H1 (cell line): ENCODE measurements at regions of chr17 and their contacts with region 1.

Region 1: DNA sequence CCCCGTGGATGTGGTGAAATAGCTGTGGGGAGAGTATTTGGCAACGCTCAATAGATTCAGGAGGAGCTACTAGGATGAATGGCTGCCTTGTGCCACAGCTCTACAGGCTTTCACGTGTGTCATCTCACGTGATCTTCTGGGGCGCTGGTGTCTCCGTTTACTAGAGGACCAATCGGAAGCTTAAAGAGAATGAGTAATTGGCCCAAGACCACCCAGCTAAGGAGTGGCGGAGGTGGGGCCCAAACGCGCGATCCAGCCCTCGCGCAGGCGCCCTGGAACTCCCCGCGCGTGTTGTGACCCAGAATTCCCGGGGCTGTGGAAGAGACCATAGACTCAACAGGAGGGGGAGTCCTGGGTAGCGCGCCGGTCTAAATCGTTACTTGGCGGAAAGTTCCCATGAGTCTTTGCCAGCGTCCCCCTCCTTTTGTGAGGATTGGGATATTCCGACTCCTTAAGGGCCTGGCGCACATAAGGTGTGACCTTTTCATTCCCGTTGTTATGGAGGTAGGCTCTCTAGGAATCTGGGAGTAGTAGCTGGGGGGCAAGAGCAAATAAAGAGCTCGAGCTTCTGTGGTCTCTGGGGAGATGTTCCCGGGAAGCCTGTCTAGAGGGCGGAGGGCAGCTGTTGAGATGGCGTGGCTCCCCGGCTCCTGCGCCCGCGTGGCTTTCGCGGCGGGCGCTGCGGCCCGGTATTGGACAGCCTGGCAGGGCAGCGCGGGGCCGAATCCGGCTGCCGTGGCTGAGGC is 23.4 kb downstream of the TRPV2 start:
- DNase-seq: peak; percentile 91 to 99
- H3K4me3 ChIP-seq: peak overlapping the region; percentile 93 to 98 (median 96)
- H3K27ac ChIP-seq: peak overlapping the region; percentile 93
- H3K4me1 ChIP-seq: peaks cover 4 to 23% (median 13%) of the 10 kb centered on the region in 4 experiments
- H3K27me3 ChIP-seq: no peaks in the 10 kb centered on the region
- CTCF ChIP-seq: no peak
- EP300 ChIP-seq: peak in 1 of 2 experiments; percentile 99; a peak in 2 of 3 replicates
- POLR2A ChIP-seq: peak; percentile 94 to 99
- RAD21 ChIP-seq: peak in 1 of 2 experiments; percentile 8; a peak in 1 of 4 replicates

Region 2: GRCh38 chr17:16380640-16381495 is 57.9 kb before region 1 on chr17 and contains the start of gene UBB:
- CTCF ChIA-PET with region 1: interaction called, 5 read pairs
- POLR2A ChIA-PET with region 1: interaction called, 120 read pairs
- DNase-seq: peak; percentile 93 to 98
- H3K4me3 ChIP-seq: peak within 1 kb of the TSS; percentile 85 to 95 (median 92)
- H3K27ac ChIP-seq: peak within 1 kb of the TSS; percentile 97
- H3K4me1 ChIP-seq: peaks cover 0 to 2% (median 0%) of the 10 kb centered on the region in 4 experiments; a peak in 4 of 7 replicates
- H3K27me3 ChIP-seq: no peaks in the 10 kb centered on the region
- CTCF ChIP-seq: peak in 1 of 3 experiments; percentile 14; a peak in 1 of 4 replicates
- EP300 ChIP-seq: peak; percentile 19 to 22; a peak in 2 of 3 replicates
- POLR2A ChIP-seq: peak; percentile 96 to 99
- RAD21 ChIP-seq: no peak; a peak in 1 of 4 replicates
- total RNA-seq, gene UBB: 1,585 and 1,597 TPM in 2 replicates

Region 3: GRCh38 chr17:16415031-16415924 is 23.5 kb before region 1 on chr17 and contains the start of gene TRPV2:
- CTCF ChIA-PET with region 1: interaction called, 5 read pairs
- POLR2A ChIA-PET with region 1: interaction called, 78 read pairs
- DNase-seq: peak in 1 of 2 experiments; percentile 73
- H3K4me3 ChIP-seq: no peak within 1 kb of the TSS
- H3K27ac ChIP-seq: no peak within 1 kb of the TSS
- H3K4me1 ChIP-seq: peaks cover 0 to 12% (median 5%) of the 10 kb centered on the region in 4 experiments; a peak in 6 of 7 replicates
- H3K27me3 ChIP-seq: no peaks in the 10 kb centered on the region
- CTCF ChIP-seq: peak; percentile 81 to 84 (median 82)
- EP300 ChIP-seq: no peak
- POLR2A ChIP-seq: no peak
- RAD21 ChIP-seq: peak; percentile 68 to 75
- total RNA-seq, gene TRPV2: 1.6 and 2.1 TPM in 2 replicates

Region 4: GRCh38 chr17:16456742-16457316 is 18.1 kb after region 1 on chr17:
- CTCF ChIA-PET with region 1: interaction called, 22 read pairs
- POLR2A ChIA-PET with region 1: interaction called, 204 read pairs
- DNase-seq: no peak
- H3K4me3 ChIP-seq: no peak overlapping the region
- H3K27ac ChIP-seq: no peak overlapping the region
- H3K4me1 ChIP-seq: peaks cover 6 to 16% (median 12%) of the 10 kb centered on the region in 4 experiments
- H3K27me3 ChIP-seq: no peaks in the 10 kb centered on the region
- CTCF ChIP-seq: peak; percentile 37 to 42 (median 37)
- EP300 ChIP-seq: no peak
- POLR2A ChIP-seq: no peak
- RAD21 ChIP-seq: peak; percentile 53 to 65

Region 5: DNA sequence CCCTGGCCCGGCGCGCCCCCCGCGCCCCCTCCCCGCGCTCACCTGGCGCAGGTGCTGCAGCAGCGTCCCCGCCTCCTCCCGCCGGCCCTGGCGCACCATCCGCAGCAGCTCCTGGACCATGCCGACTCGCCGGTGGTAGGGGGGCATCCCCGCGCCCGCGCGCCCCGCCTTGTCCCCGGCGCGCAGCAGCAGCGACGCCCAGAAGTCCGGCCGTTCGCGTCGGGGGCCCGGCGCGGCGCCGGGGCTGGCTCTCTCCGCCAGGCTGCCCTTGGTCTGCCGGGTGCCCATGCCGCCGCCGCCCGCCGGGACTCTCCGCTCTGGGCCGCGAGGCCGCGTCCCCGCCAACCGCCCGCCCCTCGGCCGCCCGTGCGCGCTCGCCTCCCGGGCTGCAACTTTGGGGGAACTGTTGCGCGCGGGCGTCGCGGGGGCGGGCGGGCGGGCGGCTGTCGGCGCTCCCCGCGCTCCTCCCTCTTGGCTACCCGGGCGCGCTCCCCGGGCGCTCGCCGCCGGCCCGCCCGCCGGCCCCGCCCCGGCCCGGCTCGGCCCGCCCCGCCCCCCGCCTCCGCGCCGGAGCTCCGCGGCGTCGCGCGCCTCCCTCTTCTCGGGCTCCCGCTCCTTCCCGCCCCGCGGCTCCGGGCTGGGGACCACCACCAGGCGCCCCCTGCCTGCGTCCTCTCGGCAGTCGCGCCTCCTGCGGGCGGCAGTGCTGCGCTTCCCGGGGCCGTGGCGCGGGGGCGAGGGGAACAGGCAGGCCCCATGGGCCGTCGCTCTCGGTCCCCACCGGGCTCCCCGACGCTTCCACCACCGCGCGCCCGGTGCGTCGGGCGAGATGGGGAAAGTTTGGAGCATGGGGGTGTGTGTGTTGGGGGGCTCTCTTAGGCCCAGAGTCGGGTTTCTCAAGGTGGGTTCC is 53.2 kb after region 1 on chr17 and contains the start of gene LRRC75A:
- CTCF ChIA-PET with region 1: interaction called, 3 read pairs
- POLR2A ChIA-PET with region 1: interaction called, 17 read pairs
- DNase-seq: peak in 1 of 2 experiments; percentile 74
- H3K4me3 ChIP-seq: peak within 1 kb of the TSS; percentile 46 to 71 (median 58)
- H3K27ac ChIP-seq: no peak within 1 kb of the TSS
- H3K4me1 ChIP-seq: peaks cover 11 to 37% (median 27%) of the 10 kb centered on the region in 4 experiments
- H3K27me3 ChIP-seq: peaks cover 0 to 23% (median 13%) of the 10 kb centered on the region in 4 experiments; a peak in 2 of 7 replicates
- CTCF ChIP-seq: peak in 2 of 3 experiments; percentile 32 to 53; a peak in 3 of 4 replicates
- EP300 ChIP-seq: no peak
- POLR2A ChIP-seq: no peak
- RAD21 ChIP-seq: peak in 1 of 2 experiments; percentile 34; a peak in 2 of 4 replicates
- total RNA-seq, gene LRRC75A: 7.2 and 9.9 TPM in 2 replicates